WTC11 (cell line): ENCODE measurements at regions of chr1 and their contacts with region 1.

Region 1: DNA sequence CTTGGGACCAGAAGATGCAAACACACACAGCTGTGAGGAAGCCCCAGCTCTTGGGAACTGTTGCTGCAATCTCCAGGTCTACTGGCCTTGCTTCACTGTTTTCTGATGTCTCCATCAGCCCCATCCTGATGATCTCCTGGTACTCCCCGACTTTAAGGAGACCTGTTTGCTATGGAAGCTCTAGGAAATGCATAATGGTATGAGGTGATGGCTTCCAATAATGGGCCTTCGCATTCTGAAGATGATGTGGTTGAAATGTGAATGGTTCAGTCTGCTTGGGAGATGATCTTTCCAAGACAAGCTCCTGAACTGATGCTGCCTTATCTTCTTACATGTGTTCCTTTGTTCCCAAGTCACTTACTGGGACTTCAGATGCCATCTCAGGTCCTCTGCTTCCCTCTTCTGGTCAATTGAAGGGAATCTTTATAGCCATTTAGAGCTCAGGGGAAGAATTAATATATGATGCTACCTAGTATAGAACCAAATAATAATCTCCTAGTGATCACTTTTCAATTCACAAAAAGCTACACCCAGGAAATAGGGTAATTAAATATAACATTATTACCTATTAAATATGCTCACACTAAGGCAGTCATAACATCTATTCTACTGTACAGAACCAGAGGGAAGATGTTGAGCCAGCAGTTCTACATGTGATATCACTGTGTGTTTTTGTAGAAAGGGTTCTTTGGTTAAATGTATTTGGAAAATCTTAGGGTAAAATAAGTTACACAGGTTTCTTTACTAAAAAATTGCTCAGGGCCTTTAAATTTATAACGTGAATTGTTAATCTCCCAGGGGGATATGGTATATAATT is 73.9 kb upstream of the VTCN1 start:
- DNase-seq: no peak
- ATAC-seq: peak; percentile 87
- H3K4me3 Mint-ChIP-seq: no peak overlapping the region
- H3K27ac Mint-ChIP-seq: no peak overlapping the region
- H3K4me1 Mint-ChIP-seq: peaks cover 17% of the 10 kb centered on the region
- H3K27me3 Mint-ChIP-seq: no peaks in the 10 kb centered on the region
- CTCF ChIP-seq: peak; percentile 30; the same call in 1 of the 2 replicates

Region 2: DNA sequence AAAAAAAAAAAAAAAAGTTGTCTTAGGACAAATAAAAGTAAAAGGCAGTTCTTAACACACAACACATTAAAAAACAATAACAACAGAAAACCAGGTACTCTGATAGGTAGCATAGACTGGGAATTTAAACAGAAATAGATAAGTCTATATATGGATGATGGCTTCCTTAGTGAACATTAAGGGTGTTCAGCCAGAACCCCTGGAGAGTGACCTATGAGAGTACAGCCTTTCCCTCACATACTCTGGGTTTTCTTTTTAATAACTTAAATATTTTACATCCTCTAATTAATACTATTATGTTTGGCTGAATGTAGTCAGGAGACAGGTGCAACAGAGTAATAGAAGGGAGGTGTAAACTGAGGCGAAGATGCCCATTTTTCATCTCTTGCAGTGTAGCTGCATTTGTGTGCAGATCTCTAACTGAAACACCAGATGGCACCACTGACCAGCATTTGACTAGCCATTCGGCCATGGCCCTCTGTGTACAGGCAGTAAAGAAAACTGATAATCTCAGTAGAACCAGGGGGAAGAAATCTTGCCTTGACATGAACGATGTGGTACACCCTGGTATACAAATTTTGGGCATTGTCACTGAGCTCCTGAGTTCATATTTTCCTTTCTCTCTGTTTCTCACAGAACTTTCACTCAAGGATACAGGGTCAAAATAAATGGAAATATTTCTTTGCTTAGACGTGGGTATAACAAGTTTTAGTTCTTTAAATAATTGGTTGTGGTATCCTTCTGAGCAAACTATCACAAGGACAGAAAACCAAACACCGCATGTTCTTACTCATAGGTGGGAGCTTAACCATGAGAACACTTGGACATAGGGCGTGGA is 216.9 kb before region 1 on chr1:
- CTCF ChIA-PET with region 1: interaction called, 29 read pairs
- POLR2A ChIA-PET with region 1: no interaction called
- DNase-seq: peak; percentile 30
- ATAC-seq: peak; percentile 88
- H3K4me3 Mint-ChIP-seq: no peak overlapping the region
- H3K27ac Mint-ChIP-seq: 0 out of 2 replicates have a peak overlapping the region, but pooled peaks have one; percentile 50
- H3K4me1 Mint-ChIP-seq: no peaks in the 10 kb centered on the region
- H3K27me3 Mint-ChIP-seq: no peaks in the 10 kb centered on the region
- CTCF ChIP-seq: peak; percentile 57

Region 3: DNA sequence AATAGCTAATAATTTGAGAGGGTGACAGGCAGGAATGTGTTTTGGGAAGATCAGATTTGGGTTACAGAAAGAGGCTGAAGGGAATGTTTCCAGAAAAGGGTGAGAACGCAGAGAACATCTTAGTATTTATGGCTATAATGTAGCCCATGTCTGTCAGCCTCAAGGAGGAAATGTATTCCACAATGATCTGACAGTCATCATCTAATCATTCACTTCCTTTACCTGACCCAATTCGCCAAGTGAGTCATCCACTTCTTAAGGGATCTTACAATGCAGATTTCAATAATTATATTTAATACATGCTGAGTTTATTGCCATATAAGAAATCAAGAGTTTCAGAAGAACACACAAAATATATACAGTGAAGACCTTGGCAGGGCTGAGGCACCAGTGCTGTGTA is 173.8 kb before region 1 on chr1:
- CTCF ChIA-PET with region 1: interaction called, 11 read pairs
- POLR2A ChIA-PET with region 1: interaction called, 3 read pairs
- DNase-seq: no peak
- ATAC-seq: no peak
- H3K4me3 Mint-ChIP-seq: no peak overlapping the region
- H3K27ac Mint-ChIP-seq: no peak overlapping the region
- H3K4me1 Mint-ChIP-seq: peaks cover 7% of the 10 kb centered on the region
- H3K27me3 Mint-ChIP-seq: no peaks in the 10 kb centered on the region
- CTCF ChIP-seq: no peak

Region 4: DNA sequence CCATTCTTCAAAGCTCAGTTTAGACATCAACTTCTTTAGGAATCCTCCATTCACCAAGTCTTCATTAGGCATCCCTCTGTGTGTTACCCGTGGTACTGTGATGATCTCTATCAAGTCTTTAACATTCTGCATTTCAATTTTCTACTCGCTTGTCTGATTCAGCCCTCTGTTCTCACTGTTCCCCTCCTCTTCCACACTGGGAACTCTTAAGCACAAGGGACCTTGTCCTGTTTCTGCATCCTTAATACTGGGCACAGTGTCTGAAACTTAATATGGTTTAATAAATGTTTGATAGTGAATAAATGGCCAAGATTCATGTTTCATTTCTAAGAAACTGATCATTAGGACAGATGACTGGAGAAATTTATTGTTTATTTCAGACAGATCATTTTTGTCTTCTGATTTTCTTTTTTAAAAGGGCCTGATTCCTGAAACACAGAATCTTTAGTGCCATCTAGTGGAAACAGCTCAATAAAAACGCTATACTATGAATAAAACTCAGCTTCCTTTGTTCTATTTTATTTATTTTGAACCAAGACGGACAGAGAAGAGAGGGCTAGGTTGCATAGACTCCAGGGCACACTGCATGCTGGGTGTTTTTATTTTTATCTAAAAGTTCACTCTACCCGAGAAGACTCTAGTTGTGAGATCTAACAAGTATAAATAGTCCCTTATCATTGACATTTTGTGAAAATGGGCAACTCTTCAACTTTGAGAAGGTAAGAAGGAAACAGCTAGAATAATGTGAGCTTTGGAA is 156.1 kb before region 1 on chr1:
- CTCF ChIA-PET with region 1: interaction called, 63 read pairs
- POLR2A ChIA-PET with region 1: no interaction called
- DNase-seq: no peak
- ATAC-seq: peak; percentile 48
- H3K4me3 Mint-ChIP-seq: no peak overlapping the region
- H3K27ac Mint-ChIP-seq: no peak overlapping the region
- H3K4me1 Mint-ChIP-seq: peaks cover 14% of the 10 kb centered on the region
- H3K27me3 Mint-ChIP-seq: no peaks in the 10 kb centered on the region
- CTCF ChIP-seq: no peak